ENCODE measurements at regions of chr1 and their contacts with region 1.

Region 1: GRCh38 chr1:23098463-23099170 is 70.0 kb downstream of the LUZP1 start:
- DNase-seq: peak; percentile 25 to 46
- ATAC-seq: peak; percentile 75 to 78
- H3K4me3 ChIP-seq: no peak overlapping the region
- H3K27ac ChIP-seq: no peak overlapping the region
- H3K4me1 ChIP-seq: peaks cover 17 to 34% of the 10 kb centered on the region in 2 donors
- H3K27me3 ChIP-seq: no peaks in the 10 kb centered on the region
- CTCF ChIP-seq: peak; percentile 73 to 96 (median 89)
- POLR2A ChIP-seq: no peak

Region 2: DNA sequence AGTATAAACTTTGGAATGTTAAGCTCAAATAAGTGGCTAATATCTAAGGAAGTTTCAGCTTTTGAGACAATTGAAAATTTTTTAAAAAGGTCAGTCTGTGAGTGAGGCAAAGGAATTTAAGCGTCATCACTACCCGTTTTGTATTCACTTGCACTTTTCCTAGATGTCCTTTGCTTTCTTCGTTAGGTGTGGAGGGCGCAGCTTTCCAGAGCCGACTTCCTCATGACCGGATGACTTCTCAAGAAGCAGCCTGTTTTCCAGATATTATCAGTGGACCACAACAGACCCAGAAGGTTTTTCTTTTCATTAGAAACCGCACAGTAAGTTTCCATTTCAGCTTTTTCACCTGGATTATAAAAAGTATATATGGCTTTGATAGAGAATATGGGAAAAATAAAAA is 48.4 kb before region 1 on chr1:
- in situ Hi-C with region 1: no loop called
- intact Hi-C with region 1: no loop called
- DNase-seq: no peak
- ATAC-seq: no peak
- H3K4me3 ChIP-seq: no peak overlapping the region
- H3K27ac ChIP-seq: no peak overlapping the region
- H3K4me1 ChIP-seq: no peaks in the 10 kb centered on the region
- H3K27me3 ChIP-seq: no peaks in the 10 kb centered on the region
- CTCF ChIP-seq: no peak
- POLR2A ChIP-seq: no peak

Region 3: GRCh38 chr1:23184212-23184934 is 85.8 kb after region 1 on chr1:
- in situ Hi-C with region 1: loop called (anchors 5 kb)
- intact Hi-C with region 1: loop called (anchors 1 kb)
- DNase-seq: no peak
- ATAC-seq: no peak
- H3K4me3 ChIP-seq: peak overlapping the region; percentile 33 to 45 (median 40)
- H3K27ac ChIP-seq: no peak overlapping the region
- H3K4me1 ChIP-seq: peaks cover 0 to 3% of the 10 kb centered on the region in 2 donors
- H3K27me3 ChIP-seq: no peaks in the 10 kb centered on the region
- CTCF ChIP-seq: peak; percentile 79 to 92 (median 82)
- POLR2A ChIP-seq: no peak

Measured in gastrocnemius medialis (tissue), 4 donors.